ENCODE measurements at regions of chr10 and their contacts with region 1.

Region 1: GRCh38 chr10:12042797-12043651 is at the start of gene UPF2:
- DNase-seq: peak; percentile 93 to 98 (median 95)
- ATAC-seq: peak; percentile 86
- H3K4me3 ChIP-seq: peak within 1 kb of the TSS; percentile 93 to 96
- H3K4me3 Mint-ChIP-seq: peak within 1 kb of the TSS; percentile 94
- H3K27ac ChIP-seq: peak within 1 kb of the TSS; percentile 98 to 99
- H3K27ac Mint-ChIP-seq: peak within 1 kb of the TSS; percentile 100
- H3K4me1 ChIP-seq: peaks cover 14% of the 10 kb centered on the region
- H3K4me1 Mint-ChIP-seq: peaks cover 40% of the 10 kb centered on the region
- H3K27me3 ChIP-seq: peaks cover 0 to 2% of the 10 kb centered on the region in 2 experiments
- H3K27me3 Mint-ChIP-seq: no peaks in the 10 kb centered on the region
- CTCF ChIP-seq: no peak
- total RNA-seq, gene UPF2: 12.7 to 14.3 TPM

Region 2: GRCh38 chr10:11986593-11987216 is 56.3 kb before region 1 on chr10:
- CTCF ChIA-PET with region 1: interaction called, 9 read pairs
- POLR2A ChIA-PET with region 1: no interaction called
- intact Hi-C with region 1: loop called in 1 of 2 experiments (anchors 5 kb)
- DNase-seq: peak; percentile 45 to 79 (median 68)
- ATAC-seq: peak; percentile 58
- H3K4me3 ChIP-seq: no peak overlapping the region
- H3K4me3 Mint-ChIP-seq: no peak overlapping the region
- H3K27ac ChIP-seq: no peak overlapping the region
- H3K27ac Mint-ChIP-seq: no peak overlapping the region
- H3K4me1 ChIP-seq: no peaks in the 10 kb centered on the region
- H3K4me1 Mint-ChIP-seq: peaks cover 6% of the 10 kb centered on the region
- H3K27me3 ChIP-seq: no peaks in the 10 kb centered on the region
- H3K27me3 Mint-ChIP-seq: no peaks in the 10 kb centered on the region
- CTCF ChIP-seq: peak; percentile 97

Region 3: GRCh38 chr10:12027539-12027938 is 15.5 kb before region 1 on chr10:
- CTCF ChIA-PET with region 1: no interaction called
- POLR2A ChIA-PET with region 1: interaction called, 3 read pairs
- intact Hi-C with region 1: loop called in 1 of 2 experiments (anchors 2 kb)
- DNase-seq: no peak
- ATAC-seq: no peak
- H3K4me3 ChIP-seq: no peak overlapping the region
- H3K4me3 Mint-ChIP-seq: no peak overlapping the region
- H3K27ac ChIP-seq: no peak overlapping the region
- H3K27ac Mint-ChIP-seq: no peak overlapping the region
- H3K4me1 ChIP-seq: peaks cover 10% of the 10 kb centered on the region
- H3K4me1 Mint-ChIP-seq: peaks cover 52% of the 10 kb centered on the region
- H3K27me3 ChIP-seq: no peaks in the 10 kb centered on the region
- H3K27me3 Mint-ChIP-seq: no peaks in the 10 kb centered on the region
- CTCF ChIP-seq: no peak

Region 4: GRCh38 chr10:12068449-12069269 is 25.6 kb after region 1 on chr10 and contains the start of gene DHTKD1:
- CTCF ChIA-PET with region 1: interaction called, 4 read pairs
- POLR2A ChIA-PET with region 1: interaction called, 8 read pairs
- intact Hi-C with region 1: loop called (anchors 1 kb)
- DNase-seq: peak; percentile 97 to 99 (median 98)
- ATAC-seq: peak; percentile 98
- H3K4me3 ChIP-seq: peak within 1 kb of the TSS; percentile 82 to 89
- H3K4me3 Mint-ChIP-seq: peak within 1 kb of the TSS; percentile 88
- H3K27ac ChIP-seq: peak within 1 kb of the TSS; percentile 66 to 75
- H3K27ac Mint-ChIP-seq: peak within 1 kb of the TSS; percentile 96
- H3K4me1 ChIP-seq: peaks cover 7% of the 10 kb centered on the region
- H3K4me1 Mint-ChIP-seq: peaks cover 19% of the 10 kb centered on the region
- H3K27me3 ChIP-seq: no peaks in the 10 kb centered on the region
- H3K27me3 Mint-ChIP-seq: no peaks in the 10 kb centered on the region
- CTCF ChIP-seq: peak; percentile 31
- total RNA-seq, gene DHTKD1: 6.6 TPM

Region 5: GRCh38 chr10:12129222-12130111 is 86.4 kb after region 1 on chr10 and contains the start of gene SEC61A2:
- CTCF ChIA-PET with region 1: no interaction called
- POLR2A ChIA-PET with region 1: no interaction called
- intact Hi-C with region 1: loop called (anchors 1 kb)
- DNase-seq: peak; percentile 92 to 99 (median 98)
- ATAC-seq: peak; percentile 89
- H3K4me3 ChIP-seq: peak within 1 kb of the TSS; percentile 61 to 78
- H3K4me3 Mint-ChIP-seq: peak within 1 kb of the TSS; percentile 90
- H3K27ac ChIP-seq: peak within 1 kb of the TSS; percentile 71 to 72
- H3K27ac Mint-ChIP-seq: peak within 1 kb of the TSS; percentile 90
- H3K4me1 ChIP-seq: peaks cover 9% of the 10 kb centered on the region
- H3K4me1 Mint-ChIP-seq: peaks cover 17% of the 10 kb centered on the region
- H3K27me3 ChIP-seq: no peaks in the 10 kb centered on the region
- H3K27me3 Mint-ChIP-seq: no peaks in the 10 kb centered on the region
- CTCF ChIP-seq: no peak
- total RNA-seq, gene SEC61A2: 10.2 to 14.5 TPM

Region 6: DNA sequence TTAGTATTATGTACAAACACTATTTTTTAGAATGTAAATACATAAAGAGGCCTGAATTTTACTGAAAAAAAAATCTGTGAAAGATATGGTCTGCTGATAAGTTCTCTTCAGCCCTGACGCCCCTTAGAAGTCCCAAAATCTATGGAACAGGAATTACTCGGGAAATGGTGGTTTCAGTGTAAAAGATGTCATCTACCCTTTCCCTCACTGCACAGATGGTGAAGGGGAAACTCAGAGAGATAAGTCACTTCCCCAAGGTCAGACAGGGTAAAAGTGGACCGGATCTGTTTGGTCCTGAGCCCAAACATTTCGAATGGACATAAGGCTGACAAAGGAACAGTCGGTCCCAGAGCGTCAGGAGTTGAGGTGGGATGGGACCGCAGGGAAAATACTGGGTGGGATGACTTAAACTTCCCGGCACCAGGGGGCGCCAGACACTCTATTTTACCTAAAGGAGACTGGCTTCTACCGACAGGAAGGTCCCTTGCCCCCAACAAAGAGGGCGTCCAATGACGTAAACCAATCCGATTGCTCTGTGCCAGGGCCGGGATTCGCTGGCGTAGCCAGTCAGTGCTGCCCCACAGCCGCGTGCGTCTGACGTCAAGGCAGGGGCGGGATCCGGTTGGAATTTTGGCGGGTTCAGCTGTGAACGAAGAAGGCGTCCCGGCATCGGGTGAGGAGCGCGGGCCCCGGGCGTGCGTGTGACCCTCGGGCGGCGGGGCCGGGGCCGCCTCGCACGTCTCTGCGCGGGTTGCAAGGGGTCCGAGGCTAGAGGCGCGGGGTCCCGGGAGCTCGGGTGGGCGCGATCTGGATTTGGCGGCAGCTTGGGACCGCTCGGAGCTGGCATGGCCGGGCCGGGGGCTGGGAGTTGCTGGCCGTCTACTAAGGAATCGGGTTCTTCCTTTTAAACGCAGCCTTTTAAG is 1118.2 kb after region 1 on chr10 and contains the start of gene MCM10:
- CTCF ChIA-PET with region 1: no interaction called
- POLR2A ChIA-PET with region 1: no interaction called
- intact Hi-C with region 1: loop called in 1 of 2 experiments (anchors 5 kb)
- DNase-seq: peak; percentile 93 to 99 (median 98)
- ATAC-seq: peak; percentile 100
- H3K4me3 ChIP-seq: peak within 1 kb of the TSS; percentile 44 to 49
- H3K4me3 Mint-ChIP-seq: peak within 1 kb of the TSS; percentile 88
- H3K27ac ChIP-seq: peak within 1 kb of the TSS in 1 of 2 experiments; percentile 40
- H3K27ac Mint-ChIP-seq: peak within 1 kb of the TSS; percentile 86
- H3K4me1 ChIP-seq: peaks cover 10% of the 10 kb centered on the region
- H3K4me1 Mint-ChIP-seq: peaks cover 14% of the 10 kb centered on the region
- H3K27me3 ChIP-seq: no peaks in the 10 kb centered on the region
- H3K27me3 Mint-ChIP-seq: no peaks in the 10 kb centered on the region
- CTCF ChIP-seq: peak; percentile 96
- total RNA-seq, gene MCM10: 0.08 to 0.19 TPM

Measured in CD8-positive, alpha-beta T cell (primary cell).